Right ventricle myocardium superior (tissue), 1 donor: ENCODE measurements at regions of chr6 and their contacts with region 1.

Region 1: GRCh38 chr6:32413427-32414047 is 6.6 kb upstream of the BTNL2 start:
- DNase-seq: peak; percentile 85
- ATAC-seq: peak; percentile 88

Region 2: GRCh38 chr6:32212076-32212760 is 201.3 kb before region 1 on chr6:
- intact Hi-C with region 1: no loop called
- DNase-seq: no peak
- ATAC-seq: no peak

Region 3: GRCh38 chr6:32700391-32701040 is 287.0 kb after region 1 on chr6:
- intact Hi-C with region 1: loop called (anchors 5 kb)
- DNase-seq: no peak
- ATAC-seq: peak; percentile 75